Sigmoid colon (tissue), 7 donors: ENCODE measurements at regions of chr14 and their contacts with region 1.

Region 1: GRCh38 chr14:94380225-94381148 is 7.9 kb downstream of the SERPINA1 start:
- DNase-seq: peak; percentile 29
- H3K4me3 ChIP-seq: no peak overlapping the region
- H3K27ac ChIP-seq: no peak overlapping the region
- H3K4me1 ChIP-seq: peaks cover 0 to 6% (median 0%) of the 10 kb centered on the region in 4 donors
- H3K27me3 ChIP-seq: no peaks in the 10 kb centered on the region
- CTCF ChIP-seq: no peak
- EP300 ChIP-seq: no peak
- POLR2A ChIP-seq: no peak

Region 2: DNA sequence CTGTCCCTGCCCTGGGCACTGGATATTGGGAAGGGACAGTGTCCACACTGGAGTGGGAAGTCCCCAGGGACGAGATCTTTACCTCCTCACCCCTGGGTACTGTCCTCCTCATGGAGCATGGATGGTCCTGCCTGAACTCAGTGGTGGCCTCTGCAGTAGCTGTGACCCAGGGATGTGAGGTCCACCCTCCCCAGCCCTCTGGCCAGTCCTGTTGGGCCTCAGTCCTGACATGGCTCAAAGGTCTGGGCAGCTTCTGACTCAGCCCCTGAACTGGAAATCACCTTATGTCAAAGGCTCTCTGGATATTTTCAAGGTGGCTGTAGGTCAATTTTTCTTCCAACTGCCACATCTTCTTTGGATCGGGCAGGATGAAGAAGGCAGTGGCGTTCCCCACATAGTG is 16.4 kb before region 1 on chr14:
- intact Hi-C with region 1: loop called (anchors 1 kb)
- DNase-seq: peak; percentile 24
- H3K4me3 ChIP-seq: no peak overlapping the region
- H3K27ac ChIP-seq: no peak overlapping the region
- H3K4me1 ChIP-seq: no peaks in the 10 kb centered on the region
- H3K27me3 ChIP-seq: no peaks in the 10 kb centered on the region
- CTCF ChIP-seq: no peak
- EP300 ChIP-seq: no peak
- POLR2A ChIP-seq: no peak